ENCODE measurements at regions of chr6 and their contacts with region 1.

Region 1: GRCh38 chr6:44096612-44097011 is 30.6 kb downstream of the MRPL14 start:
- DNase-seq: peak; percentile 82 to 92 (median 83)
- H3K4me3 ChIP-seq: no peak overlapping the region
- H3K27ac ChIP-seq: no peak overlapping the region
- H3K4me1 ChIP-seq: no peaks in the 10 kb centered on the region
- H3K27me3 ChIP-seq: no peaks in the 10 kb centered on the region
- CTCF ChIP-seq: peak; percentile 59 to 95 (median 90)
- POLR2A ChIP-seq: no peak

Region 2: GRCh38 chr6:44151348-44152108 is 54.9 kb after region 1 on chr6:
- intact Hi-C with region 1: loop called (anchors 2 kb)
- DNase-seq: peak; percentile 71 to 90 (median 82)
- H3K4me3 ChIP-seq: no peak overlapping the region
- H3K27ac ChIP-seq: no peak overlapping the region
- H3K4me1 ChIP-seq: no peaks in the 10 kb centered on the region
- H3K27me3 ChIP-seq: no peaks in the 10 kb centered on the region
- CTCF ChIP-seq: peak; percentile 94 to 100 (median 99)
- POLR2A ChIP-seq: no peak

Region 3: GRCh38 chr6:44237813-44238433 is 141.3 kb after region 1 on chr6:
- intact Hi-C with region 1: loop called (anchors 10 kb)
- DNase-seq: peak; percentile 85 to 94 (median 90)
- H3K4me3 ChIP-seq: peak overlapping the region in 3 of 4 donors; percentile 41 to 72 (median 61)
- H3K27ac ChIP-seq: peak overlapping the region; percentile 93 to 98 (median 97)
- H3K4me1 ChIP-seq: peaks cover 27 to 32% of the 10 kb centered on the region in 2 donors
- H3K27me3 ChIP-seq: no peaks in the 10 kb centered on the region
- CTCF ChIP-seq: peak; percentile 94 to 99 (median 97)
- POLR2A ChIP-seq: peak; percentile 16 to 39